ENCODE measurements at regions of chr9 and their contacts with region 1.

Region 1: DNA sequence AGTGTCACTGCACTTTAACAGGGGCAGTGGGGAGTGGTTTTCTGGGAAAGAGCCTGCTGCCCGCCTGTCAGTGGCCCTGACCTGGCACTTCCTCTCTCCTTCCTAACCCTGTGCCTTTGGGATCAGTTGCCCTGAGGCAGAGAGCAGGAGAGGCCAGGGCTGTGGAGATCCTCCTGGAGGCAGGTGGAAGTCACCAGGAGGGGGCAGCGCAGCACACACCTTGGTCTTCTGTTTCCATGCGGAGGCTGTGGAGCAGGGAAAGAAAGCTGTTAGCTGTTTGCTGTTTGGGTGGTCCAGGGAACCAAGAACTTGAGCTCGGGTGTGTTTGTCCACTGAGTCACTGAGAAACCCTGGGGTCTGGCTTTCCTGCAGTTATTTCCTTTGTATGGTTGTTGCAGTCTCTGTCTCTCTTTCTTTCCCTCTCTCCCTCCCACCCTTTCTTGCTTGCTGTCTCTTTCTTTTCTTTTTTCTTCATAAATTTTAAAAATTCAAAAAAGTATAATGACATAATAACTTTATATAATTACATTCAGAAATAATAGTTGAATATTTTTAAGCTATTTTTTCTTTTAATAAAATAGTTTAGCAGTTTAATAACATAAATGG is 28.1 kb downstream of the NTRK2 start:
- DNase-seq: no peak
- ATAC-seq: peak; percentile 71
- H3K4me3 ChIP-seq: no peak overlapping the region
- H3K27ac ChIP-seq: no peak overlapping the region
- H3K4me1 ChIP-seq: peaks cover 26% of the 10 kb centered on the region
- H3K27me3 ChIP-seq: no peaks in the 10 kb centered on the region
- CTCF ChIP-seq: peak; percentile 88 to 96 (median 94)
- EP300 ChIP-seq: no peak
- POLR2A ChIP-seq: no peak
- RAD21 ChIP-seq: peak; percentile 90

Region 2: GRCh38 chr9:84711902-84712301 is 14.3 kb after region 1 on chr9:
- CTCF ChIA-PET with region 1: interaction called, 30 read pairs
- POLR2A ChIA-PET with region 1: no interaction called
- RAD21 ChIA-PET with region 1: interaction called, 30 read pairs
- SMC1A ChIA-PET with region 1: interaction called, 64 read pairs
- in situ Hi-C with region 1: no loop called
- intact Hi-C with region 1: no loop called
- DNase-seq: no peak
- ATAC-seq: peak; percentile 51
- H3K4me3 ChIP-seq: no peak overlapping the region
- H3K27ac ChIP-seq: no peak overlapping the region
- H3K4me1 ChIP-seq: peaks cover 11% of the 10 kb centered on the region; the same call in 1 of the 2 replicates
- H3K27me3 ChIP-seq: no peaks in the 10 kb centered on the region
- CTCF ChIP-seq: no peak
- EP300 ChIP-seq: no peak; a peak in 1 of 4 replicates
- POLR2A ChIP-seq: no peak
- RAD21 ChIP-seq: no peak

Region 3: DNA sequence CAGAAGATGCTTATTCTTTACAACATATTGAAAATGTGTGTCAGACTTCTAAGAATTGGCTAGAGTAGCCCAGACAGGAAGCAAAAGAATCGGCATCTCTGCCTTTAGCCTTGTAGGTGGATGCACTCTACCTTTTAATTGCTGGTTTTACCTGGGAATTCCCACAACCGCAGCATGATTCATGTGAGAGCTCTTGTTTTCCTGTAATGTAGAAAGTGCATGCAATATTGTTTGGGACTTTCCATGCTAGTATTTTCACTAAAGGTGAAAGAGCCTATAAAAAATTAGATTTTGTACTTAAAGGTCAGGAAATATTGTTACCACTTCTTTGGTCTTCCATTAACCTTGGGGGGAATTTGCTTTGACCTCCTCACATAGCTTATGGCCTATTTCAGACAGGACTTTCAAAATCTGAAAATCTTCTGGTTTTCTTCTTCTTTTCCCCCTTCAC is 61.7 kb after region 1 on chr9:
- CTCF ChIA-PET with region 1: interaction called, 177 read pairs
- POLR2A ChIA-PET with region 1: interaction called, 18 read pairs
- RAD21 ChIA-PET with region 1: interaction called, 20 read pairs
- SMC1A ChIA-PET with region 1: interaction called, 165 read pairs
- in situ Hi-C with region 1: loop called (anchors 10 kb)
- intact Hi-C with region 1: no loop called
- DNase-seq: peak; percentile 81
- ATAC-seq: peak; percentile 78
- H3K4me3 ChIP-seq: peak overlapping the region; percentile 4; the same call in 1 of the 2 replicates
- H3K27ac ChIP-seq: peak overlapping the region; percentile 82
- H3K4me1 ChIP-seq: peaks cover 24% of the 10 kb centered on the region
- H3K27me3 ChIP-seq: no peaks in the 10 kb centered on the region
- CTCF ChIP-seq: no peak
- EP300 ChIP-seq: peak; percentile 96
- POLR2A ChIP-seq: no peak
- RAD21 ChIP-seq: no peak

Region 4: DNA sequence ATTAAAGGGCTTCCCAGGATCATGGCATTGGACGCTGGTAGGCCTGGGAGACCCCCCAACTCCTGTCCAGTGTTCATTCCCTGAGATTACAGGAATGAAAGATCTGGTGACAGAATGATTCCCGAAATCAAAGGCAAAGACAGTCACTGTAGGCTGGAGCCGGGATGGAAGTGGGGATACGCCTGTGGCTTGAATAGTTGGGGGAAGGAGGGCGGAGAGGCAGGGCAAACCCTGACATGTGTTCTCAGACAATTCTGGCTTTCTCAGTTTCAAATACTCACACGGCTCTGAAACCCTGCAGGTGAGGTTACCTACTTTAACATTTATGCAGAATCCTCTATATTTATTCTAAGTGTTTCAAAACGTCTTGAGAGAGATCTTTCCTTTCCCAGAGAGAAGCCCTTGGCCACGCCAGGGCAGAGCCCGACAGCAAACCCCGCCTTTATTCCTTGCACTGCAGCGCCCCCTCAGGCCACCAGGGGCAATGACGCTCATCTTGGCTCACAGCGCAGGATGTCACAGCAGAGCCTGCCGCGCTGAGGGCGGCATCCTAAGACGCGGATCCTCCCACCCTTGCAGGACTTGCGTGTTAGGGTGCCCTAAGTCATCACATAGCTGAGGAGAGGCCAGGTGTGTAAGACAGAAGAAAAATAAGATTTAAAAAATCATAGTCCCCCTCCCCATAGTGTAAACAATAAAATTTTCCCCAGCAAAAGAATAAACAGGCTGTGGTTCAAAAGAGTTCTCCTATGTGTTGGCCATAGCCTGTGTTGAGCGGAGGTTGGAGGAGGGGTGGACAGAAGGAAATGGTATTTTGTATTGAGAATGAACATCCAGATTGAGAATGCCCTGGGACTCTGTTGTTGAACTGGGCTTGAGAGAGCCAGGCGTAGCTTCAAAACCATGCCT is 256.4 kb after region 1 on chr9:
- CTCF ChIA-PET with region 1: interaction called, 17 read pairs
- POLR2A ChIA-PET with region 1: no interaction called
- RAD21 ChIA-PET with region 1: interaction called, 4 read pairs
- SMC1A ChIA-PET with region 1: interaction called, 29 read pairs
- in situ Hi-C with region 1: loop called (anchors 5 kb)
- intact Hi-C with region 1: loop called (anchors 2 kb)
- DNase-seq: no peak
- ATAC-seq: peak; percentile 99
- H3K4me3 ChIP-seq: no peak overlapping the region
- H3K27ac ChIP-seq: no peak overlapping the region
- H3K4me1 ChIP-seq: no peaks in the 10 kb centered on the region
- H3K27me3 ChIP-seq: no peaks in the 10 kb centered on the region
- CTCF ChIP-seq: peak; percentile 93 to 95 (median 94)
- EP300 ChIP-seq: no peak
- POLR2A ChIP-seq: no peak
- RAD21 ChIP-seq: peak; percentile 83

Region 5: GRCh38 chr9:85258823-85259370 is 561.3 kb after region 1 on chr9:
- CTCF ChIA-PET with region 1: interaction called, 13 read pairs
- POLR2A ChIA-PET with region 1: no interaction called
- RAD21 ChIA-PET with region 1: interaction called, 3 read pairs
- SMC1A ChIA-PET with region 1: interaction called, 5 read pairs
- in situ Hi-C with region 1: no loop called
- intact Hi-C with region 1: no loop called
- DNase-seq: peak; percentile 20
- ATAC-seq: peak; percentile 97
- H3K4me3 ChIP-seq: no peak overlapping the region
- H3K27ac ChIP-seq: no peak overlapping the region
- H3K4me1 ChIP-seq: no peaks in the 10 kb centered on the region
- H3K27me3 ChIP-seq: peaks cover 0 to 3% of the 10 kb centered on the region in 2 experiments; a peak in 1 of 4 replicates
- CTCF ChIP-seq: peak; percentile 69 to 82 (median 72)
- EP300 ChIP-seq: no peak
- POLR2A ChIP-seq: no peak
- RAD21 ChIP-seq: peak; percentile 75

Measured in GM12878 (cell line).